ENCODE measurements at regions of chr6 and their contacts with region 1.

Region 1: DNA sequence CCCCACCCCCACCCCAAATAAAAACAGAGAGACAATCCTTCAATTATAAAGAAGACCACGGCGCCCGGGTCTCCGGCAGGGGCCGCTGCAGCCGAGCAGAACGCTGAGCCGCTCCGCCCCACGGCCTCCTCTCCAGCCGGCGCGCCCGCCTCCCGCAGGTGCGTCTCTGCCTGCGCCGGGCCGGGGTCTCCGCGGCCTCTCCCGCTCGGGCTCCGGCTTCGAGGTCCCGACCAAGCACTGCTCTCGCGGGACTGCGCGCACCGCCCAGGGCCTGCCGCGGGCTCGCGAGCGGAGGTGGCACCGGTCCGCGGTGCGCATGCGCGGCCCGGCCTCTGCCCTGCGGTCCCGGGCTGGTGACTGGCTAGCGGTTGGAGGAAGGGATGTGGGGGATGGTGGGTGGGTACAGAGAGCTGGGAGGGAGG is 241 bp upstream of the SIRT5 start:
- DNase-seq: peak; percentile 95
- ATAC-seq: peak; percentile 80
- H3K4me3 Mint-ChIP-seq: peak overlapping the region; percentile 94
- H3K27ac Mint-ChIP-seq: peak overlapping the region; percentile 100
- H3K4me1 Mint-ChIP-seq: peaks cover 22% of the 10 kb centered on the region
- H3K27me3 Mint-ChIP-seq: no peaks in the 10 kb centered on the region

Region 2: GRCh38 chr6:12440981-12441380 is 1133.2 kb before region 1 on chr6:
- CTCF ChIA-PET with region 1: no interaction called
- POLR2A ChIA-PET with region 1: no interaction called
- intact Hi-C with region 1: no loop called
- DNase-seq: no peak
- ATAC-seq: no peak
- H3K4me3 Mint-ChIP-seq: no peak overlapping the region
- H3K27ac Mint-ChIP-seq: no peak overlapping the region
- H3K4me1 Mint-ChIP-seq: peaks cover 5% of the 10 kb centered on the region
- H3K27me3 Mint-ChIP-seq: peaks cover 17% of the 10 kb centered on the region

Region 3: DNA sequence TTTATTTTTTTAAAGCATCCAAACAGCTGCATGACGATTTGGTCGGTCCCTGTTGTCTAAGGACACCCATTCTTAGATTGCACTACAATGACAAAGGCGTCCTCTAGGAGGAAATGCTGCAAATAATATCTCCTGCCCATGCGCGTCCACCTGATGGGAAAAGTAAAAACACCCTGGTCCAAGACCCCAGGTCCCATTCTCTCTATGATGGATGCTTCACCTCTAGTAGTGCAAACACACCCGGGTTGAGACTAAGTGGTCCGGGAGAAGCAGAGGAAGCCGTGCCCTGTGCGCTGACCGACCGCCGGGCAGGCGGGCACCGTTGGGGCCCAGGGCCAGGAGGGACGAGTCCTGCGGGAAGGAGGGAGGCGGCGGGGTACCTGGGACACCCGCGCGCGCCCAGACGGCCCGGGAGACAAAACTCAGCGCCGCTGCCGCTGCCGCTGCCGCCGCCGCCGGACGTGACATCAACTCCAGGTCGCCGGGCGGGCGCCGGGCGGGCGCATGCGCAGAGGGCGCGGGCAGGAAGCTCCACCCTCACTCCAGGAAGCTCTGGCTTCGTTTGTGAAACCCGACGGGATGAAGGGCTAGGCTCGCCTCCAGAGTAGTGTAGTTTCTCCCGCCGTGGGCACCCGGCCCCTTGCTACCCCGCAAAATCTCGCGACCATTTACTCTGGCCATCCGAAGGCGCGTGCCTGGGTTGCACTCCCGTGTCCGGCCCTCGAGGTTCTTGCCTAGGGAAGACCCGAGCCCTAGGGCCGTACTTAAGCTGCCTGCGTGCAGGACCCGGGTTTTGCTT is 245.9 kb before region 1 on chr6 and contains the start of gene TBC1D7:
- CTCF ChIA-PET with region 1: interaction called, 22 read pairs
- POLR2A ChIA-PET with region 1: interaction called, 12 read pairs
- intact Hi-C with region 1: loop called (anchors 1 kb)
- DNase-seq: peak; percentile 96
- ATAC-seq: peak; percentile 91
- H3K4me3 Mint-ChIP-seq: peak within 1 kb of the TSS; percentile 88
- H3K27ac Mint-ChIP-seq: peak within 1 kb of the TSS; percentile 95
- H3K4me1 Mint-ChIP-seq: peaks cover 17% of the 10 kb centered on the region
- H3K27me3 Mint-ChIP-seq: no peaks in the 10 kb centered on the region
- total RNA-seq, gene TBC1D7: 13.8 to 16.4 TPM

Region 4: DNA sequence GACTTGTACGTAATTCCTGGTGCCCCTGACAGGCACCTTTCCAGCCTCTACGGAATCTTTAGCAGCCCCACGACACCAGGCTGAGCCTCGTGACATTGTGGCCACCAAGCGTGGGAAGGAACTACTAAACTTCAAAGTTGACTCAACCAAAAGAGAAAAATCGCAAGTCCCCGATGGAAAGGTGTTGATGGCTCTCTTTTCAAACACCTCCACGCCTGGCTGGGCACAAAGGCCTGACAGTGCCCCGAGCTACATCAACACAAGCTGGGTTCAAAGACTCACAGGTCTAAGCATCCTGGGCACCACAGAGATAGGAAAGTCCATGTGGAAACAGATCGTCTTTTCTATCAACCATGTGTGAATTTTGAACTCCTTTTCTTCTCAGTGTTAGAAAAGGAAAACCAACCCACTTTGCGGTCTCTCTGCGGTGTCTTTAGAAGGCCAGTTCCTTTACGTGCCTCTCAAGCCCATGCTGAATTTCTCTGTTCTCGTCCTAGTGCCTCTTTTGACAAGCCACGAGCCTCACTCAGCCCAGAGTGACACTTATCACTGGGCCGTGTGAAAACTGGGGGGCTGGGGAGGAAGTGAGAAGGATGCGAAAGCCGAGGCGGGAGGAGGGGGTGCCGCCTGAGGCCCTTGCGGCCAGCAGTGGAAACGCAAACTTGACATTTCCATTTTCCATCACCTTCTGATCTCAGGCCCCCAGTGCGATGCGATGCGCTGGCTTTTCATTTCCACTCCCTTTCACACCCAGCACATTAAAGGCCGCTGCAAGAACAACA is 146.2 kb before region 1 on chr6:
- CTCF ChIA-PET with region 1: interaction called, 10 read pairs
- POLR2A ChIA-PET with region 1: interaction called, 4 read pairs
- intact Hi-C with region 1: loop called in 1 of 2 experiments (anchors 1 kb)
- DNase-seq: peak; percentile 90
- ATAC-seq: peak; percentile 68
- H3K4me3 Mint-ChIP-seq: peak overlapping the region; percentile 58
- H3K27ac Mint-ChIP-seq: peak overlapping the region; percentile 95
- H3K4me1 Mint-ChIP-seq: peaks cover 76% of the 10 kb centered on the region
- H3K27me3 Mint-ChIP-seq: no peaks in the 10 kb centered on the region

Region 5: GRCh38 chr6:13593720-13594119 is 19.6 kb after region 1 on chr6:
- CTCF ChIA-PET with region 1: interaction called, 15 read pairs
- POLR2A ChIA-PET with region 1: no interaction called
- intact Hi-C with region 1: no loop called
- DNase-seq: no peak
- ATAC-seq: no peak
- H3K4me3 Mint-ChIP-seq: no peak overlapping the region
- H3K27ac Mint-ChIP-seq: no peak overlapping the region
- H3K4me1 Mint-ChIP-seq: no peaks in the 10 kb centered on the region
- H3K27me3 Mint-ChIP-seq: no peaks in the 10 kb centered on the region

Region 6: GRCh38 chr6:13795041-13795750 is 221.0 kb after region 1 on chr6:
- CTCF ChIA-PET with region 1: interaction called, 11 read pairs
- POLR2A ChIA-PET with region 1: no interaction called
- intact Hi-C with region 1: no loop called
- DNase-seq: peak; percentile 94
- ATAC-seq: peak; percentile 97
- H3K4me3 Mint-ChIP-seq: no peak overlapping the region
- H3K27ac Mint-ChIP-seq: peak overlapping the region; percentile 66
- H3K4me1 Mint-ChIP-seq: peaks cover 23% of the 10 kb centered on the region
- H3K27me3 Mint-ChIP-seq: no peaks in the 10 kb centered on the region

Measured in activated CD4-positive, alpha-beta T cell treated with anti-CD3 and anti-CD28 coated beads for 36 hours (primary cell).